Ascending aorta (tissue), 2 donors: ENCODE measurements at regions of chr1 and their contacts with region 1.

Region 1: GRCh38 chr1:65419681-65420589 is 533 bp upstream of the LEPR start:
- DNase-seq: peak; percentile 93 to 99
- H3K4me3 ChIP-seq: peak overlapping the region; percentile 85 to 93
- H3K27ac ChIP-seq: peak overlapping the region; percentile 96 to 99
- H3K4me1 ChIP-seq: peaks cover 4 to 19% of the 10 kb centered on the region in 2 donors
- H3K27me3 ChIP-seq: no peaks in the 10 kb centered on the region
- CTCF ChIP-seq: no peak

Region 2: DNA sequence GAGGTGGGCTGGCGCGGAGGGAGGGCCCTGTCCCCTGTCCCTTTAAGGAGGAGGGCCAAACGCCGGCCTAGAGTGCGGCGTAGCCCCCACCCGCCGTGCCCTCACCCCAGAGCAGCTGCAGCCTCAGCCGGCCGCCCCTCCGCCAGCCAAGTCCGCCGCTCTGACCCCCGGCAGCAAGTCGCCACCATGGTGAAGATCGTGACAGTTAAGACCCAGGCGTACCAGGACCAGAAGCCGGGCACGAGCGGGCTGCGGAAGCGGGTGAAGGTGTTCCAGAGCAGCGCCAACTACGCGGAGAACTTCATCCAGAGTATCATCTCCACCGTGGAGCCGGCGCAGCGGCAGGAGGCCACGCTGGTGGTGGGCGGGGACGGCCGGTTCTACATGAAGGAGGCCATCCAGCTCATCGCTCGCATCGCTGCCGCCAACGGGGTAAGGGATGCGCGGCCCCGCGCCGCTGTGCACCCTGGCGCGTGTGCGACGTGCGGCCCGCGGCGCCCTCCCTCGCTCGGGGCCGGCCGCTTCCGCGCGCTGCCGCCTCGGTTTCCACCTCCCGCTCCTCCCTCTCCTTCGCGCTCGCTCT is 1826.5 kb before region 1 on chr1 and contains the start of gene PGM1:
- intact Hi-C with region 1: loop called (anchors 5 kb)
- DNase-seq: peak in 1 of 2 donors; percentile 87
- H3K4me3 ChIP-seq: peak within 1 kb of the TSS; percentile 87 to 89
- H3K27ac ChIP-seq: peak within 1 kb of the TSS; percentile 92 to 94
- H3K4me1 ChIP-seq: peaks cover 0 to 23% of the 10 kb centered on the region in 2 donors
- H3K27me3 ChIP-seq: no peaks in the 10 kb centered on the region
- CTCF ChIP-seq: no peak
- total RNA-seq, gene PGM1: 23.7 TPM

Region 3: DNA sequence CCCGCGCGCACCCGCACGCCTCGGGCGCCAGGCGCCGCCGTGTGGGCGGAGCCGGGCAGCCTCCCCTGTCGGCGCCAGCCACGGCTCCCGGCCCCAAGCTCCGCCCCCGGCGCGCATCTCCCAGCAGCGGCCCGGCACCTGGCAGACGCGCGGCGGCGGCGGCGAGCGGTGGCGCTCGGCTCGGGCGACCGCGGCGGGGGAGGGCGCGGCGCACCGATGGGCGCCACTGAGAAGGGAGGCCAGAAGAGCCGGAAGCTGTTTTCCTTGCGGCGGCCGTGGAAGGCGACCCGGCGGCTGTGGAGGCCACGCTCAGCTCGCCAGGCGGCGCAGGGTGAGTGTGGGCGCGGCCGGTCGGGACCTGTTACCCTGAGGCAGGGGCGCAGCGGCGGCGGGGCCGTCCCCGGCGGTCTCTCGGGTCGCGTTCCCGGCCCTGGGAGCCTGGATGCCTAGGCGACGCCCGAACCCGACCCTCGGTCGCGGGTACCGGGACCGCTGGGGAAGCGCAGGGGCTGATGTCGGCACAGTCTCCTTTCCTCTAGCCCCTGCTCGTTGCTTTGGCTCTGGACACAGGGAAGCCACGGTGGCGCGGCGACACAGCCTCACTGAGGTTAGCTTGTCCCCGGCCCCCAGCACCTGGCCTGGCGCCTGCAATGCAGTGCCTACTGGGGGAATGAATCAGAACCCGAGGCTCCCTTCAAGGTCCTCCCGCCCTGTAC is 165.5 kb before region 1 on chr1:
- intact Hi-C with region 1: loop called (anchors 2 kb)
- DNase-seq: peak; percentile 25 to 86
- H3K4me3 ChIP-seq: peak overlapping the region; percentile 72 to 90
- H3K27ac ChIP-seq: peak overlapping the region; percentile 45 to 72
- H3K4me1 ChIP-seq: peaks cover 5 to 11% of the 10 kb centered on the region in 2 donors
- H3K27me3 ChIP-seq: no peaks in the 10 kb centered on the region
- CTCF ChIP-seq: peak; percentile 5 to 30 (median 17)

Region 4: GRCh38 chr1:66262211-66262963 is 842.5 kb after region 1 on chr1:
- intact Hi-C with region 1: loop called (anchors 10 kb)
- DNase-seq: peak in 1 of 2 donors; percentile 67
- H3K4me3 ChIP-seq: no peak overlapping the region
- H3K27ac ChIP-seq: no peak overlapping the region
- H3K4me1 ChIP-seq: no peaks in the 10 kb centered on the region
- H3K27me3 ChIP-seq: no peaks in the 10 kb centered on the region
- CTCF ChIP-seq: no peak